Mammary epithelial cell (primary cell): ENCODE measurements at regions of chr1 and their contacts with region 1.

Region 1: GRCh38 chr1:30903343-30904034 is 5.1 kb downstream of the SDC3 start:
- DNase-seq: no peak
- H3K4me3 ChIP-seq: no peak overlapping the region
- H3K27ac ChIP-seq: no peak overlapping the region
- H3K4me1 ChIP-seq: peaks cover 16% of the 10 kb centered on the region
- H3K27me3 ChIP-seq: no peaks in the 10 kb centered on the region
- CTCF ChIP-seq: no peak

Region 2: GRCh38 chr1:30868833-30869435 is 34.6 kb before region 1 on chr1:
- CTCF ChIA-PET with region 1: no interaction called
- dilution Hi-C with region 1: loop called (anchors 5 kb)
- in situ Hi-C with region 1: no loop called
- intact Hi-C with region 1: loop called (anchors 1 kb)
- DNase-seq: no peak
- H3K4me3 ChIP-seq: no peak overlapping the region
- H3K27ac ChIP-seq: no peak overlapping the region
- H3K4me1 ChIP-seq: no peaks in the 10 kb centered on the region
- H3K27me3 ChIP-seq: no peaks in the 10 kb centered on the region
- CTCF ChIP-seq: no peak